ENCODE measurements at regions of chr15 and their contacts with region 1.

Region 1: DNA sequence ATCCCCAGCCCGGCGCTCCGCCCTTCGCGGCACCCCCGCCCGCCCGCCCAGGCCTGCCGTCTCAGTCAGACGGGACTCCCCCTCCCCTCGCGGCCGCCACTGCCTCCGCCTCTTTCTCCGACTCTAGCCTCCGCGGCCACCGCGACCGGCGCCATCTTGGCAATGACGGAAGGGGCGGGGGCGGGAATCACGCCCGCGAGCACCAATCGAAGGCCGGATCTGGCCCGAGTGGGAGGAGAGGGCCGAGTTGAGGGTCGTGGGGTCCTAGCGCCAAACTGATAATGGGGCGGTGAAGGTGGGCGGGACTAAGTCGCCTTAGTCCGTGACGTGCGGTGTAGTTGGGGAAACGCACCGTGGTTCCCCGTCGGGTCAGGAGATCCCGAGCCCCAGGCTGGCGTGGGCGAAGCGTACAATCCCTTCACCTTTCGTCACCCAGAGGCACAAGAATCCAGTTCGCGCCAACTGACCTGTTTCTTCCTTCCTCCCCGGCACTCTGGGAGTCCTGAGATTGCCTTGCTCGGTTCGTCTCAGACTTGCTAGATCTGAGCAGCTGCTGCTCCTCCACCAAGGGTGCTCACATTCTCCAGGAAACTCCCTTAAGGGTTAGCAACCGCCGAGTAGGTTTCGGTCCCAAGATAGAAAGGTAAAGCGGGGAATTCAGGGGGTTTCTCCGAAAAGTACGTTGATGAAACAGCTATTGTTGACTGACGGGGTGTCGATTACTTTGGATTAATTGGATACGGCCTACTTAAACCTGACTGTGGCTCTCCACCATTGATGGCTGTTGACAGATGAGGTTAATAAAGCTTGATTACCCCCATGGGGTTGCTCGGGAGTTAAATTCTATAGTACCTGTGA is at the start of gene DENND4A:
- DNase-seq: peak; percentile 94 to 98
- ATAC-seq: peak; percentile 92 to 94
- H3K4me3 ChIP-seq: peak within 1 kb of the TSS; percentile 68 to 100 (median 85)
- H3K27ac ChIP-seq: peak within 1 kb of the TSS; percentile 96 to 100 (median 98)
- H3K4me1 ChIP-seq: peaks cover 18 to 32% of the 10 kb centered on the region in 2 donors
- H3K27me3 ChIP-seq: no peaks in the 10 kb centered on the region
- CTCF ChIP-seq: no peak
- POLR2A ChIP-seq: peak; percentile 72 to 89
- total RNA-seq, gene DENND4A: 24.4 to 46.4 (median 33.1) TPM

Region 2: GRCh38 chr15:65304389-65305144 is 487.8 kb before region 1 on chr15 and contains the start of gene RNU5B-1:
- in situ Hi-C with region 1: no loop called
- intact Hi-C with region 1: no loop called
- DNase-seq: peak; percentile 61 to 72
- ATAC-seq: peak; percentile 90 to 91
- H3K4me3 ChIP-seq: peak within 1 kb of the TSS; percentile 64 to 70 (median 67)
- H3K27ac ChIP-seq: peak within 1 kb of the TSS; percentile 87 to 95 (median 91)
- H3K4me1 ChIP-seq: peaks cover 7 to 8% of the 10 kb centered on the region in 2 donors
- H3K27me3 ChIP-seq: no peaks in the 10 kb centered on the region
- CTCF ChIP-seq: peak; percentile 75 to 90 (median 85)
- POLR2A ChIP-seq: peak; percentile 97 to 99
- total RNA-seq, gene RNU5B-1: not detected

Region 3: DNA sequence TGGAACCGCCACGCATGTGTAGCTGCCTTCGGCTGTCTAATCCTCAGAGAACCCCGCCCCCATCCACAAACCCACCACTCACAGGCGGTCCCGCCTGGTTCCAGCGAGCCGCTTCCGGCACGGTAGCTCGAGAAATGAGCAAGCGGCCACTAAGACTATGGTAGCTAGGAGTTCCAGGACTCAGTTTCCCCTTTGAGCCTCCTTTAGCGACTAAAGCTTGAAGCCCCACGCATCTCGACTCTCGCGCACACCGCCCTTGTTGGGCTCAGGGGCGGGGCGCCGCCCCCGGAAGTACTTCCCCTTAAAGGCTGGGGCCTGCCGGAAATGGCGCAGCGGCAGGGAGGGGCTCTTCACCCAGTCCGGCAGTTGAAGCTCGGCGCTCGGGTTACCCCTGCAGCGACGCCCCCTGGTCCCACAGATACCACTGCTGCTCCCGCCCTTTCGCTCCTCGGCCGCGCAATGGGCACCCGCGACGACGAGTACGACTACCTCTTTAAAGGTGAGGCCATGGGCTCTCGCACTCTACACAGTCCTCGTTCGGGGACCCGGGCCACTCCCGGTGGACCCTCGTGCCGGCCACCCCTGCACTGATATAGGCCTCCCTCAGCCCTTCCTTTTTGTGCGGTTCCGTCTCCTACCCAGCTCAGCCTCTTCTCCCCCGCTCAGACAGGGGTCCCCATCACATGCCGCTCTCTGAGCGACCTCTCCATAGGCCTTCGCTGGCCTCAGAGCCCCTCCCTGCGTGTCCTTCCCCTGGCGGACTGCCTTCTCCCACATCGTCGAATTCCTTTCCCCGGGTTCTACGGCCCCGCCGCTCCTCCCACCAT is 77.0 kb after region 1 on chr15 and contains the start of gene RAB11A:
- in situ Hi-C with region 1: loop called in 2 of 4 experiments (anchors 5 to 10 kb)
- intact Hi-C with region 1: loop called (anchors 1 kb)
- DNase-seq: peak; percentile 94 to 97
- ATAC-seq: peak; percentile 93 to 94
- H3K4me3 ChIP-seq: peak within 1 kb of the TSS; percentile 87 to 98 (median 88)
- H3K27ac ChIP-seq: peak within 1 kb of the TSS; percentile 92 to 100 (median 95)
- H3K4me1 ChIP-seq: peaks cover 17 to 23% of the 10 kb centered on the region in 2 donors
- H3K27me3 ChIP-seq: no peaks in the 10 kb centered on the region
- CTCF ChIP-seq: peak in 4 of 5 experiments; percentile 25 to 55 (median 40)
- POLR2A ChIP-seq: peak; percentile 95 to 98
- total RNA-seq, gene RAB11A: 93.0 to 207 (median 166) TPM

Measured in gastrocnemius medialis (tissue), 4 donors.